ENCODE measurements at regions of chr11 and their contacts with region 1.

Region 1: GRCh38 chr11:119095066-119095880 is 6.4 kb downstream of the DPAGT1 start:
- DNase-seq: peak; percentile 97
- H3K4me3 ChIP-seq: peak overlapping the region; percentile 69
- CTCF ChIP-seq: no peak

Region 2: GRCh38 chr11:118980191-118980881 is 114.9 kb before region 1 on chr11:
- CTCF ChIA-PET with region 1: no interaction called
- POLR2A ChIA-PET with region 1: no interaction called
- DNase-seq: no peak
- H3K4me3 ChIP-seq: no peak overlapping the region
- CTCF ChIP-seq: no peak

Region 3: GRCh38 chr11:119084663-119085436 is 10.4 kb before region 1 on chr11 and contains the start of gene HMBS:
- CTCF ChIA-PET with region 1: interaction called, 24 read pairs
- POLR2A ChIA-PET with region 1: interaction called, 50 read pairs
- DNase-seq: no peak
- H3K4me3 ChIP-seq: peak within 1 kb of the TSS; percentile 94
- CTCF ChIP-seq: no peak

Region 4: GRCh38 chr11:119108146-119108856 is 13.0 kb after region 1 on chr11:
- CTCF ChIA-PET with region 1: interaction called, 13 read pairs
- POLR2A ChIA-PET with region 1: interaction called, 8 read pairs
- DNase-seq: no peak
- H3K4me3 ChIP-seq: peak overlapping the region; percentile 82
- CTCF ChIP-seq: no peak

Measured in AG04449 (cell line).